Activated T-helper 1 cell treated with anti-CD3 and anti-CD28 coated beads, Interleukin-12 subunit alpha, Interleukin-12 subunit beta, Interleukin-2, Interleukin-4 antibody, amounts not matched to agents 30 ng/mL and 10 ng/mL and 1 ng/mL, durations not matched to agents 14 hours and 24 hours and 36 hours (primary cell): ENCODE measurements at regions of chr9 and their contacts with region 1.

Region 1: DNA sequence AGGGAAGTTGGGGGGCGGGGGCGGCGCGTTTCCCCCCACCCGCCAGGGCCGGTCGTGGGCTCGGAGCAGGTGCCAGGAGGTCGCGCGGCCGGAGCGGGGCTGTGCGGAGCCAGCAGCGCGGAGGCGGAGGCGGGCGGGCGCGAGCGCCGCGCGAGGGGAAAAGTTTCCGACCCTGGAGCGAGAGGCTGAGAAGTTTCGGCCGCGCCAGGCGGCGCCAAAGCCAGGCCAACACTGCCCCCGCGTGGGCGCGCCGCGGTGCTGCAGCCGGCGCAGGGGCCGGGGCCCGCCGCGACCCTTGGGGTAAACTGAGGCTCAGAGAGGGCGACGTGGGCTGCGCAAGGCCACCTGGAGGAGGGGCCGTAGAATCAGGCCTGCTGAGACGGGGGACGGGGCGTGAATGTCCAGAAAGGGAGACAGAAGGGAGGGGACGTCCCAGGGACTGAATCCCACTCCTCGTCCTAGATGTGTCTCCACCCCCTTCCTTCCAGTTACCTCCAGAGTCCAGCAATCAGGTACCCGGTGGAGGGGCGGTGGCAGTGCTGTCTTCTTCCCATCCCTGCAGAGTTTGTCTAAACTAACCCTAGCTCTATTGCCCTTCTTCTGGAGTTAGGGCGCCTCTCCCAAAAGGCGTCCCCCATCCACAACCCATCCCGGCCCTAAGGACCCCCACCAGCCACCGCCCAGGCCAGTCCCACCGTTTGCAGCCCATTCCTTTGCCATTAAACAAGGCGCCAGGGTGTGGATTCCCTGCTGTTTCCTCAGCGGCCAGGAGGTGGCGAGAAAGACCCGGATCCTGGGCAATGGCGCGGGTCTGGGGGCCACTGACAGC is 10.2 kb downstream of the C9orf50 start:
- DNase-seq: peak; percentile 62
- H3K4me3 Mint-ChIP-seq: peak overlapping the region; percentile 82
- H3K27ac Mint-ChIP-seq: peak overlapping the region; percentile 83
- H3K4me1 Mint-ChIP-seq: peaks cover 38% of the 10 kb centered on the region
- H3K27me3 Mint-ChIP-seq: peaks cover 5% of the 10 kb centered on the region

Region 2: DNA sequence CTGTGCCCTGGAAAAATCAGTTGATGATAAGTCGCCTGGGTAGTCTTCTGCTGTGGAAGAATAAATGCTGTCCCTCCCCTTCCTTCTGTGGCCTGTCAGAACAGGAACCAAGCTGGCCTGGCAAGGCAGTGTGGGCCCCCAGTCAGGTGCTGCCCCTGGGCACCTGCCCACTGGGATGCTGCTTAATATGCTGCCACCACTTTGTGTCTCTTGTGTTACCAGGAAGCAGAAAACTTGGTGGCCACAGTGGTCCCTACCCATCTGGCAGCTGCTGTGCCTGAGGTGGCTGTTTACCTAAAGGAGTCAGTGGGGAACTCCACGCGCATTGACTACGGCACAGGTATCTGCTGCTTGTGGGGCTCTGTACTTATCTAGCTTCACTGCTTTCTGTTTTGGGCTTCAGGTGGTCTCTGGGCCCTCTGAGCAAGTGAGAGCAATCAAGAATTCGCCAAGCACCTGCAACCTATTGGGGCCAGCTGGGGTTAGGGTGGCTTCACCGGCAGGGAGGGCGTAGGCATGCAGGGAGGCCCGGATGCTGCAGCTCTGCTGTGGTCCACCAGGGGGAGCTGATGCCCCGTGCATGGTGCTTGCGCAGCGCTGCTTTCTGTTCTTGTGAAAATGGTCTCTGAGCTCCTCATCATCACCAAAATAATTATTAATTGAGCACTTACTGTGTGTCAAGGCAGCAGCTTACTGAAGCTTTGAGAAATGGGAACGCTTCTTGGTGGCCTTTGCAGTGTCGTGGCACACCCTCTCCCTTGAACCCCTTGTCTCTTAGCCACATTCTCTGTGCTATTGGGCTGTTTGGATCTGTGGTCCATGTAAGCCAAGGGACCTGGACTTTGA is 479.2 kb before region 1 on chr9:
- intact Hi-C with region 1: loop called (anchors 2 kb)
- DNase-seq: peak; percentile 75
- H3K4me3 Mint-ChIP-seq: no peak overlapping the region
- H3K27ac Mint-ChIP-seq: no peak overlapping the region
- H3K4me1 Mint-ChIP-seq: peaks cover 6% of the 10 kb centered on the region
- H3K27me3 Mint-ChIP-seq: no peaks in the 10 kb centered on the region

Region 3: DNA sequence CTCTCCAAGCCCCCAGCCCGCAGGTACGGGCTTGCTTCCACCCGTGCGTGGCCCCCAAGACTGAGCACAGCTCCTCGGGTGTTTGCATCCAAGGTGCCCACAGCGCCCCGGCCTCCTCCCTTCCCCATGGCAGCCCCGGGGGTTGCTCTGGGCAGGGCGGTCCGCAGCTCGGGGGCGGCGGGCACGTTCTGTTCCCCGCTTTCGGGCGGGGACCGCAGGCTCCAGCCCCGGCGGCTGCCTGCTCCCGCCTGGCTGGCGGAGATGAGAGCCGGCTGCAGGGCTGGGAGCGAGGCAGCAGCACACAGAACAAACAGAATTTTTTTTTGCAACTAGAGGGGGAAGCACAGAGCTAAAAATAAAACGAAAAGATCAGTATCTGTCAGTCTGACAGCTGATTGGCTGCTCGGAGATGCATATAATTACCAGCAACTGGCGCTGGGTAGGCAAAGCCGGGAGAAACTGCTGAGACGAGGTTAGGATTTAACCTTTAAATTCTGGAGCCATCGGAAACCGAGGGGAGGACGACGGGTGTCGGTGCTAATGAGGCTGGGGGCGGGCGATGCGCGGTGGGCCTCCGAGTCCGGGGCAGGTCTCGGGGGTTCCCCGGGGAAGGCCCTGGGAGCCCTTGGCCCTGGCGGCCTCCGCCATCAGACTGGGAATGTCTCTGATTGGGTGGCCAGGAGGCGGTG is 290.0 kb before region 1 on chr9:
- intact Hi-C with region 1: loop called (anchors 5 kb)
- DNase-seq: peak; percentile 42
- H3K4me3 Mint-ChIP-seq: peak overlapping the region; percentile 77
- H3K27ac Mint-ChIP-seq: peak overlapping the region; percentile 81
- H3K4me1 Mint-ChIP-seq: peaks cover 19% of the 10 kb centered on the region
- H3K27me3 Mint-ChIP-seq: peaks cover 6% of the 10 kb centered on the region

Region 4: GRCh38 chr9:129495534-129496325 is 115.0 kb before region 1 on chr9:
- intact Hi-C with region 1: loop called (anchors 1 kb)
- DNase-seq: peak; percentile 82
- H3K4me3 Mint-ChIP-seq: peak overlapping the region; percentile 81
- H3K27ac Mint-ChIP-seq: peak overlapping the region; percentile 77
- H3K4me1 Mint-ChIP-seq: peaks cover 32% of the 10 kb centered on the region
- H3K27me3 Mint-ChIP-seq: no peaks in the 10 kb centered on the region

Region 5: GRCh38 chr9:129586685-129587084 is 24.0 kb before region 1 on chr9:
- intact Hi-C with region 1: loop called (anchors 2 kb)
- DNase-seq: no peak
- H3K4me3 Mint-ChIP-seq: no peak overlapping the region
- H3K27ac Mint-ChIP-seq: peak overlapping the region; percentile 89
- H3K4me1 Mint-ChIP-seq: peaks cover 67% of the 10 kb centered on the region
- H3K27me3 Mint-ChIP-seq: peaks cover 2% of the 10 kb centered on the region

Region 6: DNA sequence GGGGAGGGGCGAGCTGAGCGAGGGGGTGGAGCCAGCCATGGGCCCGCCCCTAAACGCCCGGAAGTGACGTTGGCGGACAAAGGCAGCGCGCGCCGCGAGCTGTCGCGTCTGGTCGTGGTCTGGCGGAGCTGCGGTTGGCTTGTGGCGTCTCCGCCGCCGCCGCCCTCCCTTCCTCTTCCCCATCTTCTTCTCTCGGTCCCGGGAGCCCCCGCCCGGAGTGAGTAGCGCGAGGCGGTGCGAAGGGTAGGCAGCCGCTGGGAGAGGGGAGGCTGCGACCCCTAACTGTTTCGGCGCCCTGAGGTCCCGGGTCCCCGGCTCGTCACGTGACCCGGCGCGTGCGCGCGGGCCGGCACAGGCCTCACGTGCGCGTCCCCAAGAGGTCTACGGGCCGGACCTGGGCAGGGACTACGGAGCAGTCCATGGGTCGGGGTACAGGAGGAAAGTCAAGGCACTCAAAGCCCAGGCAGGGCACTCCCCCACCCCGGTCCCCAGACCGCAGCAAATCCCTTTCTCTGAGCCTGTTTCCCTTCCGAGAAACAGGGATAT is 15.5 kb after region 1 on chr9 and contains the start of gene NTMT1:
- intact Hi-C with region 1: loop called (anchors 1 kb)
- DNase-seq: peak; percentile 85
- H3K4me3 Mint-ChIP-seq: peak within 1 kb of the TSS; percentile 86
- H3K27ac Mint-ChIP-seq: peak within 1 kb of the TSS; percentile 95
- H3K4me1 Mint-ChIP-seq: peaks cover 41% of the 10 kb centered on the region
- H3K27me3 Mint-ChIP-seq: peaks cover 7% of the 10 kb centered on the region
- total RNA-seq, gene NTMT1: 67.1 and 67.3 TPM in 2 replicates

Region 7: DNA sequence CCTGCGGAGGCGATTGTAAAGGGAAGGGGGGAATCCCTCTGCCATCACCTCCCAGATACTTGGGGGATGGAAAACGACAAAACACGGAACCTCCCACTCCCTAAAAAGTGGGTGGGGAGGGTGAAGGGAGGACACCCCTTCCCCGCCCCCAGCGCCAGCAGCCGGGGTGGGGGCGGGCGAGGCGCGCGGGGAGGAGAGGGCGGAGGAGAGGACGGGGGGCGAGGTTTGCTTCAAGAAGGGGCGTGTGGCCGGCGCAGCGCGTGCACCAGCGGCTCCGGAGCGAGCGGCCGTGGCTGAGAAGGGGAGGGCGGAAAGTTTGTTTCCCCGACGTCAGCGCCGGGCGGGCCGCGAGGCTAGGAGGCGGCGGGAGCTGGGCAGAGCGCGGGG is 54.7 kb after region 1 on chr9 and contains the start of gene PRRX2:
- intact Hi-C with region 1: no loop called
- DNase-seq: peak; percentile 38
- H3K4me3 Mint-ChIP-seq: peak within 1 kb of the TSS; percentile 77
- H3K27ac Mint-ChIP-seq: peak within 1 kb of the TSS; percentile 61
- H3K4me1 Mint-ChIP-seq: peaks cover 6% of the 10 kb centered on the region
- H3K27me3 Mint-ChIP-seq: peaks cover 31% of the 10 kb centered on the region
- total RNA-seq, gene PRRX2: 6.2 and 7.8 TPM in 2 replicates

Region 8: DNA sequence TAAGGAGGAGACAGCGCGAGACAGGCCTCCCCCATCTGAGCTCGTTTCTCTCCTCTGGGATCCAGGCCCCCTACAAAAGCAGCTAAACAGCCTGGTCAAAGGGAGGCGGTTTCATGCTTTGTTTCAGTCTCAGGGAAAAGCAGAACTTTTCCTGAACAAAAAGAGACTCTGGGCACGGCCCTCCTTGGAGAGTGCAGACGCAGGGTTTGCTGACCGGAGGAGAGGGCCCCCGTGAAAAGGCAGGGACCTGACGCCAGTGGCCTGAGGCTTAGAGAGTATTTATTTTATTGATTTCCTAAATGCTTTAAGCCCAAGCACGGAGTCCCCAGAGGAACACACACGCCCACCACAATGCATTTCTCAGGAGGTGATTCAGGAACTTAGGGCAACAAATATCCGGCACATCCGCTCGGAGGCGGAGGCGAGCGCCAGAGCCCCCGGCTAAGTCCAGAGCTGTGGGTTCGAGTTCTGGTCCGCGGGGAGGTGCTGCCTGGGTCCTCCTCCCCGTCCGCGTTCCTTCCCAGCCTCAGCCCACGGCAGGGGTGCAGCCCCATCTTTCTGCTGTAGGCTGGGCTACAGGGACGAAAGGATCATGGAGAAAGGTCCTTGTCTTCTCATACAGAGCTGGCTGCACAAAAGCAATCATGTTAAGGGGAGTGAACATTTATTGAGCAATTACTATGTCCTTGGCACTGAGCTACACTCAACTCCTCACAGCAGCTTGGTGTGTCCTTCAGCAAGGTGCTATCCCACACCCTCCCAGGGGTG is 102.1 kb after region 1 on chr9:
- intact Hi-C with region 1: no loop called
- DNase-seq: no peak
- H3K4me3 Mint-ChIP-seq: no peak overlapping the region
- H3K27ac Mint-ChIP-seq: no peak overlapping the region
- H3K4me1 Mint-ChIP-seq: peaks cover 16% of the 10 kb centered on the region
- H3K27me3 Mint-ChIP-seq: peaks cover 12% of the 10 kb centered on the region

Region 9: GRCh38 chr9:129751826-129752801 is 141.4 kb after region 1 on chr9:
- intact Hi-C with region 1: no loop called
- DNase-seq: no peak
- H3K4me3 Mint-ChIP-seq: no peak overlapping the region
- H3K27ac Mint-ChIP-seq: no peak overlapping the region
- H3K4me1 Mint-ChIP-seq: peaks cover 15% of the 10 kb centered on the region
- H3K27me3 Mint-ChIP-seq: peaks cover 6% of the 10 kb centered on the region